Naive thymus-derived CD4-positive, alpha-beta T cell (primary cell): ENCODE measurements at regions of chr10 and their contacts with region 1.

Region 1: DNA sequence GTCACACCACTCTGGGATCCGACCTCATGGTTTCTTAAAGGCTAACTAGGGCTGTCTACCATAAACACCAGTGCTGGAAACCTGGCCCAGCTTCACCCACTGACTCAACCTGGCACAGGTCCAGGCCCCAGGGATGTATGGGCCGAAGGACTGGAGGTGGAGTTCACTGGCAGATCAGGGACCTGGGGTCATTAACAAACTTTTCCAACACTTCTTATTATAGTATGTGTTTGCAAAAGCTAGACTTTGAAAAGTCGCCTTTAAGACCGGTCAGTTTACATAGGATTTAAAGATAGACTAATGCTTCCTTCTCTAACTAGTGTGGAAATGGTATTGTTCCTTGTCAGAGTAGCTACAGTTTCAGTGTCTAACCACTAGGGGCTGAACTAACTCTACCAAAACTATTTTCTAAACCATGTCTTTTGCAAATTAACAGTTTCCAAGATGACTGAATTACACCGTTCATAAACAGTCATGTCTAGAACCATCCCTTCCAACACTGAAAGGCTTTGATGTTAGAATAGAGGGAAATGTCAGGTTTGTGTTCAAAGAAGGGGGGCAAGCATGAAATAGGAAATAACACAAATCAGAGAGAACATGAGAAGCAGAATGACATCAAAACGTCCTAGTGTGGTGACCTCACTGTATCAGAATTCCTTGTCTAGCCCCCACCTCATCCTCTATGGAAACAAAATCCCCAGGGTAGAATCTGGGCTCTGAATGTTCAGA is 29.7 kb downstream of the STN1 start:
- DNase-seq: peak in 7 of 9 donors; percentile 36 to 72 (median 59)
- ATAC-seq: peak; percentile 90
- H3K4me3 ChIP-seq: no peak overlapping the region
- H3K4me3 Mint-ChIP-seq: no peak overlapping the region
- H3K27ac ChIP-seq: no peak overlapping the region
- H3K27ac Mint-ChIP-seq: peak overlapping the region in 8 of 9 donors; percentile 5 to 83 (median 38)
- H3K4me1 ChIP-seq: peaks cover 4 to 5% of the 10 kb centered on the region in 2 donors
- H3K4me1 Mint-ChIP-seq: peaks cover 6 to 33% (median 20%) of the 10 kb centered on the region in 7 donors
- H3K27me3 ChIP-seq: no peaks in the 10 kb centered on the region
- H3K27me3 Mint-ChIP-seq: no peaks in the 10 kb centered on the region

Region 2: GRCh38 chr10:103712570-103713498 is 175.4 kb before region 1 on chr10:
- CTCF ChIA-PET with region 1: interaction called, 12 read pairs
- POLR2A ChIA-PET with region 1: no interaction called
- intact Hi-C with region 1: loop called (anchors 1 kb)
- DNase-seq: peak; percentile 54 to 80 (median 69)
- ATAC-seq: peak; percentile 91
- H3K4me3 ChIP-seq: no peak overlapping the region
- H3K4me3 Mint-ChIP-seq: no peak overlapping the region
- H3K27ac ChIP-seq: no peak overlapping the region
- H3K27ac Mint-ChIP-seq: peak overlapping the region in 1 of 9 donors; percentile 25
- H3K4me1 ChIP-seq: no peaks in the 10 kb centered on the region
- H3K4me1 Mint-ChIP-seq: peaks cover 0 to 6% (median 2%) of the 10 kb centered on the region in 7 donors
- H3K27me3 ChIP-seq: no peaks in the 10 kb centered on the region
- H3K27me3 Mint-ChIP-seq: peaks cover 0 to 4% (median 0%) of the 10 kb centered on the region in 5 donors

Region 3: GRCh38 chr10:103911021-103911459 is 22.8 kb after region 1 on chr10:
- CTCF ChIA-PET with region 1: interaction called, 7 read pairs
- POLR2A ChIA-PET with region 1: interaction called, 3 read pairs
- intact Hi-C with region 1: loop called (anchors 1 kb)
- DNase-seq: peak in 8 of 9 donors; percentile 44 to 89 (median 83)
- ATAC-seq: peak; percentile 84
- H3K4me3 ChIP-seq: peak overlapping the region; percentile 55
- H3K4me3 Mint-ChIP-seq: peak overlapping the region; percentile 74 to 87 (median 84)
- H3K27ac ChIP-seq: peak overlapping the region; percentile 78
- H3K27ac Mint-ChIP-seq: peak overlapping the region; percentile 96 to 99 (median 97)
- H3K4me1 ChIP-seq: peaks cover 80 to 81% of the 10 kb centered on the region in 2 donors
- H3K4me1 Mint-ChIP-seq: peaks cover 47 to 88% (median 76%) of the 10 kb centered on the region in 7 donors
- H3K27me3 ChIP-seq: no peaks in the 10 kb centered on the region
- H3K27me3 Mint-ChIP-seq: no peaks in the 10 kb centered on the region

Region 4: GRCh38 chr10:103983367-103983911 is 95.2 kb after region 1 on chr10:
- CTCF ChIA-PET with region 1: interaction called, 5 read pairs
- POLR2A ChIA-PET with region 1: interaction called, 4 read pairs
- intact Hi-C with region 1: loop called (anchors 1 to 5 kb)
- DNase-seq: peak in 7 of 9 donors; percentile 17 to 47 (median 34)
- ATAC-seq: peak; percentile 87
- H3K4me3 ChIP-seq: peak overlapping the region; percentile 21
- H3K4me3 Mint-ChIP-seq: peak overlapping the region; percentile 22 to 87 (median 65)
- H3K27ac ChIP-seq: peak overlapping the region; percentile 64
- H3K27ac Mint-ChIP-seq: peak overlapping the region; percentile 38 to 89 (median 79)
- H3K4me1 ChIP-seq: peaks cover 21 to 23% of the 10 kb centered on the region in 2 donors
- H3K4me1 Mint-ChIP-seq: peaks cover 52 to 90% (median 77%) of the 10 kb centered on the region in 7 donors
- H3K27me3 ChIP-seq: no peaks in the 10 kb centered on the region
- H3K27me3 Mint-ChIP-seq: no peaks in the 10 kb centered on the region

Region 5: GRCh38 chr10:104080762-104081161 is 192.5 kb after region 1 on chr10:
- CTCF ChIA-PET with region 1: interaction called, 5 read pairs
- POLR2A ChIA-PET with region 1: no interaction called
- intact Hi-C with region 1: loop called in 1 of 2 experiments (anchors 1 kb)
- DNase-seq: peak in 5 of 9 donors; percentile 8 to 20 (median 12)
- ATAC-seq: peak; percentile 42
- H3K4me3 ChIP-seq: no peak overlapping the region
- H3K4me3 Mint-ChIP-seq: no peak overlapping the region
- H3K27ac ChIP-seq: no peak overlapping the region
- H3K27ac Mint-ChIP-seq: no peak overlapping the region
- H3K4me1 ChIP-seq: no peaks in the 10 kb centered on the region
- H3K4me1 Mint-ChIP-seq: peaks cover 0 to 4% (median 0%) of the 10 kb centered on the region in 7 donors
- H3K27me3 ChIP-seq: no peaks in the 10 kb centered on the region
- H3K27me3 Mint-ChIP-seq: peaks cover 0 to 22% (median 0%) of the 10 kb centered on the region in 5 donors

Region 6: GRCh38 chr10:104254493-104255310 is 366.4 kb after region 1 on chr10 and contains the start of gene GSTO1:
- CTCF ChIA-PET with region 1: interaction called, 3 read pairs
- POLR2A ChIA-PET with region 1: no interaction called
- intact Hi-C with region 1: loop called in 1 of 2 experiments (anchors 5 kb)
- DNase-seq: peak; percentile 28 to 59 (median 35)
- ATAC-seq: peak; percentile 71
- H3K4me3 ChIP-seq: peak within 1 kb of the TSS; percentile 83
- H3K4me3 Mint-ChIP-seq: peak within 1 kb of the TSS; percentile 84 to 100 (median 96)
- H3K27ac ChIP-seq: peak within 1 kb of the TSS; percentile 89
- H3K27ac Mint-ChIP-seq: peak within 1 kb of the TSS; percentile 85 to 97 (median 96)
- H3K4me1 ChIP-seq: peaks cover 9 to 23% of the 10 kb centered on the region in 2 donors
- H3K4me1 Mint-ChIP-seq: peaks cover 33 to 56% (median 48%) of the 10 kb centered on the region in 7 donors
- H3K27me3 ChIP-seq: no peaks in the 10 kb centered on the region
- H3K27me3 Mint-ChIP-seq: peaks cover 0 to 19% (median 0%) of the 10 kb centered on the region in 5 donors
- total RNA-seq, gene GSTO1: 28.1 to 129 (median 49.1) TPM